BJ (cell line): ENCODE measurements at regions of chr5 and their contacts with region 1.

Region 1: GRCh38 chr5:132410451-132411381 is 41.2 kb downstream of the SLC22A5 start:
- DNase-seq: no peak
- H3K4me3 ChIP-seq: peak overlapping the region; percentile 55
- H3K27me3 ChIP-seq: no peaks in the 10 kb centered on the region
- CTCF ChIP-seq: peak; percentile 54

Region 2: DNA sequence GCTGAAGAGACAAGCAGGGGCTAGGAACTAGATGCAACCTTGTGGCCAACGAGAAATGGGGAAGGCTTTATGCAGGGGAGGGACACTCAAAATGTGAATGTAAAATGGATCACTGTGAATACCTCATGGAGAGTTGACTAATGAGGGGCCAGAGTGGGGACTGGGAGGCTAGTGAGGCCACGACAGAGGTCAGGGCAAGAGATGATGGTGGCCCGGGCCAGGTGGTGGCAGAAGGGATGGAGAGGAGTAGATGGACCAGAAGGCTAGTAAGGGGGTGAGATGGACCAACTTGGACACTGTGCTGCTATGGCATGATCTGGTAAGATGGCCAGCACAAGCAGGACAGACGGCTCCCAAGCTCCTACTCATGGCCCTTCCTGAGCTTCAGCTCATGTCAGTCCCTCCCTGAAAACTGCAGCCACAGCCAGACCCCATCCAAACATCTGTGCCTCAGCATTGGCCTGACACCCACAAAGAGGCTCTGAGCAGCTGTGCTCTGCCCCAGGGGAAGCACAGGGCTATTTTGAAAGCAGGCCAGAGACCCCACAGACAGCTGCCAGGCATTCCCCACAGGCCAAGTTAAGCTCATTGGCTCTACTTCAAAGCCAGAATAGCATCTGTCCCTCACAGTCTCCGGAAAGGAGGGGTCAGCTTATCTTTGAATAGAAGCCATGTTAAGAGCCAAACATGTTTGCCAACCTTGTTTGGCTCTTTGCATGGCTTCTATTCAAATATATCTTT is 205.2 kb before region 1 on chr5:
- CTCF ChIA-PET with region 1: no interaction called
- POLR2A ChIA-PET with region 1: no interaction called
- DNase-seq: no peak
- H3K4me3 ChIP-seq: no peak overlapping the region
- H3K27me3 ChIP-seq: no peaks in the 10 kb centered on the region
- CTCF ChIP-seq: no peak

Region 3: DNA sequence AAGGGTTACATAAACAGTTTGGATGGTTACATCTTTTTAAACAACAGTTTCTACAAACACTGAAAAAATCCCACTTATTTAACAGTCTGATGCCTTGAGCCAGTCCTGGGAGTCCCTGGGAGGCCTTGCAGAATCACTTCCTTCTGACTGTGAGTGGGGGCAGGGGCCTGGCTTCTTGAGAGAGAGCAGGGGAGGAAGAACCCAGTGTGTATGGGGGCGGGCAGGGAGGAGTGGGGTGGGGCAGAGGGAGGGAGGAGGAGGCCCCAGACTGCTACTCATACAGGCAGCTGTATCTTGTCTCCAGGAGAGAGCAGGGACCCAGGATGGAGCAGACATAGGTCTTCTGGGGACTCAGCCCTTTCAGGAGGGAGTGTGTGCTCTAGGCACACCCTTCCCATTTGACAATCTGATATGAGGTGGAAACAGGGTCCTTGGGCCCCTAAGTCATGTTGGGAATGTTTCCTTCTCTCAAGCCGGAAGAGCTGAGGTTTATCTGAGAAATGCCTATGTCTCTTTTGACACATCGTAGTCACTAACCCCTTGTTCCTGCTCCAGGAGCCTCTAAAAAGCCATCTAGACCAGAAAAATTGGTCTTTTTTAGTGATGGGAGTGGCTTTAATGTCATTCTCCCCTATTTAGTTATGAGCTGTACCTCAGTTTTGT is 27.0 kb after region 1 on chr5:
- CTCF ChIA-PET with region 1: no interaction called
- POLR2A ChIA-PET with region 1: no interaction called
- DNase-seq: peak; percentile 83
- H3K4me3 ChIP-seq: no peak overlapping the region
- H3K27me3 ChIP-seq: no peaks in the 10 kb centered on the region
- CTCF ChIP-seq: no peak

Region 4: DNA sequence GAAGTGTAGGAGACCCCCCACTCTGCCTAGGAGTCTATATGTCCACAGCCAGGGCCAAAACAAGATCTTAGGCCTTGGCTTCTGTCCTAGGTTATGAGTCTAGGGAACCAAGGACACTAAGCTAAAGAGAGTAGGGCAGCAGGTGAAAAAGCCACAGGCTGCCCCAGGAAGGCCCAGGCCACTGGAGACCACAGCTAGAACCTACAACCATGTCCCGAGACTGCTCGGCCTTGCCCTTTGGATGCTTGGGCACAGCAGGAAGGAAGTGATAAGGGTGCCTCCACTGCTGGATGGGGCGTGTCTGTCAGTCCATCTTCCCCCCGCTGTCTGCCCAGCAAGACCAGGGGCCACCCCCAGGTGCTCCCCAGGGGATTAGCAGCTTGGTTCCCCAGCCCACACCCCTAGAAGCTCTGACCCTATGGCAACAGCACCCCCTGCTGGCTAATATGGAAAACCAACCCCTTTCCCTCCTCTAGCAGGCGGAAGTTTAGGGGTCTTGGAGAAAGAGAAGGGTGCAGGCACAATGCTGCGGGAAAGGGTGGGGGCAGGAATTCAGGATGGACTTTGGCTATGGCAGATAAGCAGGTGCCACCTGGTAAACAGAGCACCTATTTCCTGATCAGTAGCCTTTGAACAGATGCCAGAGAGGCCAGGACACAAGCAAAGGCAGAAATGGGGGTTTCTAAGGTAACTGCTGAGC is 90.4 kb after region 1 on chr5:
- CTCF ChIA-PET with region 1: interaction called, 64 read pairs
- POLR2A ChIA-PET with region 1: no interaction called
- DNase-seq: no peak
- H3K4me3 ChIP-seq: no peak overlapping the region
- H3K27me3 ChIP-seq: no peaks in the 10 kb centered on the region
- CTCF ChIP-seq: peak; percentile 77

Region 5: GRCh38 chr5:132506094-132506692 is 95.5 kb after region 1 on chr5:
- CTCF ChIA-PET with region 1: interaction called, 64 read pairs
- POLR2A ChIA-PET with region 1: no interaction called
- DNase-seq: peak; percentile 85
- H3K4me3 ChIP-seq: no peak overlapping the region
- H3K27me3 ChIP-seq: no peaks in the 10 kb centered on the region
- CTCF ChIP-seq: peak; percentile 77